WTC11 (cell line): ENCODE measurements at regions of chr17 and their contacts with region 1.

Region 1: GRCh38 chr17:48011405-48012150 is 26.0 kb downstream of the COPZ2 start:
- DNase-seq: peak; percentile 59
- ATAC-seq: peak; percentile 79
- H3K4me3 Mint-ChIP-seq: peak overlapping the region; percentile 88
- H3K27ac Mint-ChIP-seq: no peak overlapping the region
- H3K4me1 Mint-ChIP-seq: peaks cover 23% of the 10 kb centered on the region
- H3K27me3 Mint-ChIP-seq: peaks cover 26% of the 10 kb centered on the region
- CTCF ChIP-seq: no peak

Region 2: GRCh38 chr17:47978324-47978723 is 33.3 kb before region 1 on chr17:
- CTCF ChIA-PET with region 1: interaction called, 242 read pairs
- POLR2A ChIA-PET with region 1: interaction called, 3 read pairs
- DNase-seq: peak; percentile 87
- ATAC-seq: peak; percentile 94
- H3K4me3 Mint-ChIP-seq: no peak overlapping the region
- H3K27ac Mint-ChIP-seq: no peak overlapping the region
- H3K4me1 Mint-ChIP-seq: no peaks in the 10 kb centered on the region
- H3K27me3 Mint-ChIP-seq: no peaks in the 10 kb centered on the region
- CTCF ChIP-seq: peak; percentile 78; the same call in 1 of the 2 replicates

Region 3: GRCh38 chr17:47987240-47987835 is 24.2 kb before region 1 on chr17:
- CTCF ChIA-PET with region 1: interaction called, 15 read pairs
- POLR2A ChIA-PET with region 1: interaction called, 3 read pairs
- DNase-seq: peak; percentile 40
- ATAC-seq: peak; percentile 38
- H3K4me3 Mint-ChIP-seq: no peak overlapping the region
- H3K27ac Mint-ChIP-seq: no peak overlapping the region
- H3K4me1 Mint-ChIP-seq: peaks cover 42% of the 10 kb centered on the region
- H3K27me3 Mint-ChIP-seq: no peaks in the 10 kb centered on the region
- CTCF ChIP-seq: no peak

Region 4: DNA sequence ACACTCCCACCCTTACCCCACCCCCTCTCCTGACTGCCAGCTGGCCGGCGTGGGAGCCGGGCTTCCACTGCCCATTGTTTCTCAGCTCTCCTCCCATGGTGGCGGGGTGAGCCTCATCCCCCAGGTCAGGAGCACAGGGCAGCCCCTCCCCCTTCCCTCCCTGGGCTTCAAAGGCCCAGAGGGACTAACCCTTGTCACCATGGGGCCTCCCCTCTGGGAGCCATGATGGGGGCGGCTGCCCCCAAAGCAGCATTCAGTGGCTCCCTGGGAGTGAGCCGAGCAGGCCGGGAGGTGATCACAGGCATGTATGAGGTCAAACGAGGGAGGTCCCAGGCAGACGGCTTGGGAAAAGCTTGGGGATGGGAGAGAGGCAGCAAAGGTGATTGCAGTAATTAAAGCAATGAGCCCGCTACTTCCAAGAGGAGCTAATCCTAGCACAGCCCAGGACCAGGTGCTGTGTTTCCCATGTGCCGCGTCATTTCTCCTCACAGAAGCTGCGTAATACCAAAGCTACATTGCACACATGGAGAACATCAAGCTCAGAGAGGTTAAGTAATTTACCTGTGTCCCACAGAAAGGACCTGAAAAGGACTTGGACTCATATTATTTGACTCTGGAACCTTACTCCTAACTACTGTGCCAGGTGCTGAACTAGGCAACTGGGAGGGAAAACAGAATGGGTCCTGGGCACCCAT is 16.2 kb before region 1 on chr17:
- CTCF ChIA-PET with region 1: interaction called, 25 read pairs
- POLR2A ChIA-PET with region 1: no interaction called
- DNase-seq: peak; percentile 35
- ATAC-seq: peak; percentile 50
- H3K4me3 Mint-ChIP-seq: no peak overlapping the region
- H3K27ac Mint-ChIP-seq: no peak overlapping the region; the same call in 1 of the 2 replicates
- H3K4me1 Mint-ChIP-seq: peaks cover 51% of the 10 kb centered on the region
- H3K27me3 Mint-ChIP-seq: no peaks in the 10 kb centered on the region
- CTCF ChIP-seq: no peak